CD8-positive, alpha-beta memory T cell (primary cell): ENCODE measurements at regions of chr6 and their contacts with region 1.

Region 1: DNA sequence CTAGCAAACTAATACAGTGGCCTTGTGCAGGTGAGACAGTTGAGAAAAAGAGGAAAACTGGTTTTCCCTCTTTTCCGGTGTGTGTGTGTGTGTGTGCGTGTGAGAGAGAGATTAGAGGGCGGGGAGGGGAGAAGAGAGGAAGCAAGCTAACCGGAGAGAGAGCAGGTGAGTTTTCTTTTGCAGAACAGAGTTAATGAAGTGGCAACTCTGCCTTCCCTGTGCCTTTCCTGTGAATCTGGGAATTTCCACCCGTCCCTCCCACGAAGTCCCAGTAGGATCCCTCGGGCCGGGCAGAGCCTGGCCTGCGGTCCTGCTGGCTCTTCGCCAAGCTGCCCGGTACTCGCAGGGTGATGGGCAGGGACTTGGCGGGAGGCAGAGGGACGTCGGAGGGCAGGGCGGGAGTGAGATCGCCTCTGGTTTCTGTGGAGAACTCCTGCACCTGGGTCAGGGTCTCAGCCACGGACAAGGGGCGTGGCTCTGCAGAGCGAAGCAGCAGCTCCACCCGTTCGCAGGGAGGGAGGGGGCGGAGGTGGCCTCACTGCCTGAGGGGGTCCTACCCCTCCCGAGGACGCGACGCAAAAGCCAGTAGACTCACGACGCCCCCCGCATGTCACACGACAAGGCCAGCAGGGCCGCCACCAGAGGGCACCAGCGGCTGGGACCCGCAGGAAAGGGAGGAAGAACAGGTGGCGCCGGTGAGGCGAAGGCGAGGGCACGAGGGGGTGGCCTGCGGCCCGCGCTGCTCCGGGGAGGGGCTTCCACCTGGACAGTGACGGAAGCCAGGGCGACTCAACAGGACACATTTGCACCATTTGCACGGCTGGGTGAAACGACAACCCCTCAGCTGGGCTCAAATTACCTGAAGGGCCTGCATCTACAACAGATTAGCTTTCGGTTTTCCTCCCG is 51.2 kb upstream of the RNF182 start:
- DNase-seq: peak; percentile 53 to 76 (median 56)
- H3K4me3 ChIP-seq: peak overlapping the region; percentile 63
- H3K4me3 Mint-ChIP-seq: peak overlapping the region; percentile 75 to 89 (median 81)
- H3K27ac ChIP-seq: no peak overlapping the region
- H3K27ac Mint-ChIP-seq: peak overlapping the region in 2 of 8 donors; percentile 35 to 83
- H3K4me1 ChIP-seq: peaks cover 7% of the 10 kb centered on the region
- H3K4me1 Mint-ChIP-seq: peaks cover 8 to 15% (median 13%) of the 10 kb centered on the region in 3 donors
- H3K27me3 ChIP-seq: no peaks in the 10 kb centered on the region
- H3K27me3 Mint-ChIP-seq: peaks cover 20 to 28% of the 10 kb centered on the region in 2 donors

Region 2: DNA sequence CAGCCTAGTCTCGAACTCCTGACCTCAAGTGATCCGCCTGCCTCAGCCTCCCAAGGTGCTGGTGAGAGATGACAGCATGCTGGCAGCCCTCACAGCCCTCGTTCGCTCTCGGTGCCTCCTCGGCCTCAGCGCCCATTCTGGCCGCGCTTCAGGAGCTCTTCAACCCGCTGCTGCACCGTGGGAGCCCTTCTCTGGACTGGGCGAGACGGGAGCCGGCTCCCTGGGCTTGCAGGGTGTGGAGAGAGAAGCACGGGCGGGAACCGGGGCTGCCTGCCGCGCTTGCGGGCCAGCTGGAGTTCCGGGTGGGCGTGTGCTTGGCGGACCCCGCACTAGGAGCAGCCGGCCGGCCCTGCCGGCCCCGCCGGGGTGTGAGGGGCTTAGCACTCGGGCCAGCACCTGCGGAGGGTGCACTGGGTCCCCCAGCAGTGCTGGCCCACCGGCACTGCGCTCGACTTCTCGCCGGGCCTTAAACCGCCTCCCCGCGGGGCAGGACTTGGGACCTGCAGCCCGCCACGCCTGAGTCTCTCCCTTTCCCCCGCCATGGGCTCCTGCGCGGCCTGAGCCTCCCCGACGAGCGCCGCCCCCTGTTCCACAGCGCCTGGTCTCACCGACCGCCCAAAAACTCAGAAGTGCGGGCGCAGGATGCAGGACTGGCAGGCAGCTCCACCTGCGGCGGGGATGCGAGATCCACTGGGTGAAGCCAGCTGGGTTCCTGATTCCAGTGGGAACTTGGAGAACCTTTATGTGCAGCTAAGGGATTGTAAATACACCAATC is 130.4 kb before region 1 on chr6:
- CTCF ChIA-PET with region 1: no interaction called
- POLR2A ChIA-PET with region 1: no interaction called
- DNase-seq: no peak
- H3K4me3 ChIP-seq: no peak overlapping the region
- H3K4me3 Mint-ChIP-seq: peak overlapping the region in 1 of 7 donors; percentile 10
- H3K27ac ChIP-seq: no peak overlapping the region
- H3K27ac Mint-ChIP-seq: no peak overlapping the region
- H3K4me1 ChIP-seq: no peaks in the 10 kb centered on the region
- H3K4me1 Mint-ChIP-seq: peaks cover 7 to 11% (median 10%) of the 10 kb centered on the region in 3 donors
- H3K27me3 ChIP-seq: no peaks in the 10 kb centered on the region
- H3K27me3 Mint-ChIP-seq: no peaks in the 10 kb centered on the region

Region 3: GRCh38 chr6:13767121-13767808 is 106.3 kb before region 1 on chr6:
- CTCF ChIA-PET with region 1: no interaction called
- POLR2A ChIA-PET with region 1: no interaction called
- DNase-seq: peak; percentile 25 to 70 (median 45)
- H3K4me3 ChIP-seq: peak overlapping the region; percentile 35
- H3K4me3 Mint-ChIP-seq: peak overlapping the region; percentile 28 to 87 (median 77)
- H3K27ac ChIP-seq: no peak overlapping the region
- H3K27ac Mint-ChIP-seq: peak overlapping the region in 5 of 8 donors; percentile 78 to 93 (median 80)
- H3K4me1 ChIP-seq: peaks cover 28% of the 10 kb centered on the region
- H3K4me1 Mint-ChIP-seq: peaks cover 26 to 38% (median 38%) of the 10 kb centered on the region in 3 donors
- H3K27me3 ChIP-seq: no peaks in the 10 kb centered on the region
- H3K27me3 Mint-ChIP-seq: peaks cover 0 to 3% of the 10 kb centered on the region in 2 donors

Region 4: GRCh38 chr6:13859871-13860555 is 13.5 kb before region 1 on chr6:
- CTCF ChIA-PET with region 1: interaction called, 10 read pairs
- POLR2A ChIA-PET with region 1: no interaction called
- DNase-seq: no peak
- H3K4me3 ChIP-seq: no peak overlapping the region
- H3K4me3 Mint-ChIP-seq: peak overlapping the region in 2 of 7 donors; percentile 27 to 76
- H3K27ac ChIP-seq: no peak overlapping the region
- H3K27ac Mint-ChIP-seq: no peak overlapping the region
- H3K4me1 ChIP-seq: no peaks in the 10 kb centered on the region
- H3K4me1 Mint-ChIP-seq: peaks cover 0 to 6% (median 0%) of the 10 kb centered on the region in 3 donors
- H3K27me3 ChIP-seq: peaks cover 9% of the 10 kb centered on the region
- H3K27me3 Mint-ChIP-seq: peaks cover 36 to 75% of the 10 kb centered on the region in 2 donors

Region 5: DNA sequence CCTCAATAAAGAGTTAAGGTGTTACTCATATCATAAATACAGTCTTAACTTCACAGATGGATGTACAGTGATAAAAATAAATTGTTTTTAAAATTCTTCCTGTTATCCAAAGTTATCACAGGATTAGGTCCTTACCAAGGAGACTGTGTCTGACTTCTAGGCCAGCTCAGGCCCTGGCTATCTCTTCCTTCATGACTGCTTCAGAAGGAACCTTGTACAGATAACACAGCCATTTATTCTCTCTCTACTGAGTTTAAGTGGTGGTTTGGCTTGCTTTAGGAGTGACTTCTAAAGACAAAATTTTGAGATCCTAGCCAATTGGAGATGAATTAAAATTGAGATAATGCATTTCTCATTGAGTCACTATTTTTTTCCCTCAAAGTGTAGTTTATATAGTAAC is 10.4 kb after region 1 on chr6:
- CTCF ChIA-PET with region 1: interaction called, 13 read pairs
- POLR2A ChIA-PET with region 1: no interaction called
- DNase-seq: no peak
- H3K4me3 ChIP-seq: no peak overlapping the region
- H3K4me3 Mint-ChIP-seq: no peak overlapping the region
- H3K27ac ChIP-seq: no peak overlapping the region
- H3K27ac Mint-ChIP-seq: no peak overlapping the region
- H3K4me1 ChIP-seq: no peaks in the 10 kb centered on the region
- H3K4me1 Mint-ChIP-seq: no peaks in the 10 kb centered on the region
- H3K27me3 ChIP-seq: no peaks in the 10 kb centered on the region
- H3K27me3 Mint-ChIP-seq: peaks cover 5 to 7% of the 10 kb centered on the region in 2 donors